ENCODE measurements at regions of chr12 and their contacts with region 1.

Region 1: DNA sequence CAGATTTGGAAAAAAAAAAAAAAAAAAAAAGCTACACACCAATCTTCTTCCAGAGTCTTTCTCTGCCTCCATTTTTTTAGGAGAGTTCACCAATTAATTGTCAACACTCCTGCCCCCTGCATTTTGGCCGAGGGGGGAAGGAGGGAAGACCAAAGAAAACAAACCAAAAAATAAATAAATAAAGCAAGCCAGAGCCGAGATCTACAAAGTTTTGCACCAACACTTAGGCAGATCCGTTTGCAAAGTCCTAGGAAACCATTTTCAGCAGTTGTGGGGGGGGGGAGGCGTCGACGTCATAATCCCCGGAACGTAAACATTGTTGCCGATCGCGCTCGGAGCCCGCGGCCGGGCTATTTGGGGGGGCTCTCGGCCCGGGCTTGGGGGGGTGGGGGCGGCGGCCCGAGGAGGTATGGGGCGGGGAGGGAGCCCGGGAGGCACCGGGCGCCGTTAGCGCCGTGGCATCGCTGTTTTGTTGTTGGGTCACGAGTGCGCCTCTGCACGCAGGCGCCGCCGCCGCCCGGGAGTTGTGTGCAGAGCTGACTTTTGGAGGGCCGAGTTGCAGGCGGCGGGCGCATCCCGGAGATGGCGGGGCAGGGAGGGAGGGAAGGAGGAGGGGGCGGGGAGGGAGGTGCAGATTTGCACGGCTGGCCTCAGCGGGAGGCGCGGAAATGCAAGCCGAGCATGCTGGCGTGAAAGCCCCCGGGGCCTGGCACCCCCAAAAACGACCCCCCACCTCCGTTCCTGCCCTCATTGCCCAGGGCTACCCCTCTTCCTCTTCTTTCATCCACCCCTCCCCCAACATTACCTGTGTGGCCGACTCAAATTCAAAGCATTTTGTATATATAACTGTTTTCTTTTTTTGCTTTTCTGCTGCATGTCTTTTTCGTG is 598 bp downstream of the KDM2B start:
- DNase-seq: no peak
- H3K4me3 ChIP-seq: peak overlapping the region; percentile 69
- H3K27ac ChIP-seq: peak overlapping the region; percentile 68
- H3K27me3 ChIP-seq: no peaks in the 10 kb centered on the region
- CTCF ChIP-seq: no peak

Region 2: GRCh38 chr12:121536899-121537813 is 43.1 kb before region 1 on chr12:
- CTCF ChIA-PET with region 1: interaction called, 5 read pairs
- POLR2A ChIA-PET with region 1: interaction called, 15 read pairs
- DNase-seq: peak; percentile 11
- H3K4me3 ChIP-seq: peak overlapping the region; percentile 58
- H3K27ac ChIP-seq: peak overlapping the region; percentile 84
- H3K27me3 ChIP-seq: no peaks in the 10 kb centered on the region
- CTCF ChIP-seq: no peak

Measured in AG04450 (cell line).